ENCODE measurements at regions of chr3 and their contacts with region 1.

Region 1: DNA sequence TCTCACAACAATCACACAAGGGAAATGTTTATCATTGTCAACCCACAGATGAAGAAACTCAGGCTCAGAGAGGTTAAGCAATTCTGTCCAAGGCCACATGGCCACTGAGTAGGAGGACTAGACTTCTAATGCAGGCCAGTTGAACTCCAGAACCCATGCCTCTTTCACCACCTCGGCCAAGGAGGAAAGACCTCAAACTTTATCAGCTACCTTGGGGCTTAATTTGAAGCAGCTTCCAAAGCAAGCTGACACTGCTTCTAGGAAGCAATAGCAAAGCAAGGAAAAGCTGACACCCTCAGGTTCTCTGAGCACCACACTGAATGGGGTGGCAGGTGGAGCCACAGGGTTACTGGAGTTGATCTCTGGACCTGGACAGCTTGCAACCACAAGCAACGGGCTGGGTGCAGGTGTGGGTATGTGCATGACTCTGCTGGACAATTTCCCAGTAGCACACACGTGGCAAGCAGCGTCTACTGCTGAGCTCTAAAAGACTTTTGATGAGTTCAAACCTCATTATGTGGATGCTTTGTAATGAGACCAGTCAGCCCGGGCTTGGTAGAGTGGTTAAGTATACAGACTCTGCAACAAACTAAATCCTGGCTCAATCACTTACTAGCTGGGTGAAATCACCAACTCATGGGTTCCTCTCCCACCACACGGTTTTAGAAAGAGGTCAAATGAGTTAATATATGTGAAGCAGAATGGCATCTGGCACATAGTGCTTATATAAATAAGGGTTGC is 23.1 kb downstream of the CCNL1 start:
- DNase-seq: peak; percentile 35 to 46
- H3K4me3 ChIP-seq: no peak overlapping the region; the same call in 1 of the 2 replicates
- H3K27ac ChIP-seq: no peak overlapping the region
- H3K4me1 ChIP-seq: peaks cover 25% of the 10 kb centered on the region
- H3K27me3 ChIP-seq: no peaks in the 10 kb centered on the region
- CTCF ChIP-seq: no peak

Region 2: GRCh38 chr3:155753036-155753639 is 1383.7 kb before region 1 on chr3:
- CTCF ChIA-PET with region 1: no interaction called
- POLR2A ChIA-PET with region 1: no interaction called
- intact Hi-C with region 1: loop called (anchors 2 kb)
- DNase-seq: no peak
- H3K4me3 ChIP-seq: no peak overlapping the region
- H3K27ac ChIP-seq: no peak overlapping the region
- H3K4me1 ChIP-seq: peaks cover 14% of the 10 kb centered on the region
- H3K27me3 ChIP-seq: no peaks in the 10 kb centered on the region
- CTCF ChIP-seq: peak; percentile 76

Region 3: GRCh38 chr3:156017352-156018030 is 1119.3 kb before region 1 on chr3:
- CTCF ChIA-PET with region 1: no interaction called
- POLR2A ChIA-PET with region 1: no interaction called
- intact Hi-C with region 1: loop called (anchors 5 kb)
- DNase-seq: no peak
- H3K4me3 ChIP-seq: no peak overlapping the region
- H3K27ac ChIP-seq: no peak overlapping the region
- H3K4me1 ChIP-seq: no peaks in the 10 kb centered on the region
- H3K27me3 ChIP-seq: no peaks in the 10 kb centered on the region
- CTCF ChIP-seq: no peak

Region 4: DNA sequence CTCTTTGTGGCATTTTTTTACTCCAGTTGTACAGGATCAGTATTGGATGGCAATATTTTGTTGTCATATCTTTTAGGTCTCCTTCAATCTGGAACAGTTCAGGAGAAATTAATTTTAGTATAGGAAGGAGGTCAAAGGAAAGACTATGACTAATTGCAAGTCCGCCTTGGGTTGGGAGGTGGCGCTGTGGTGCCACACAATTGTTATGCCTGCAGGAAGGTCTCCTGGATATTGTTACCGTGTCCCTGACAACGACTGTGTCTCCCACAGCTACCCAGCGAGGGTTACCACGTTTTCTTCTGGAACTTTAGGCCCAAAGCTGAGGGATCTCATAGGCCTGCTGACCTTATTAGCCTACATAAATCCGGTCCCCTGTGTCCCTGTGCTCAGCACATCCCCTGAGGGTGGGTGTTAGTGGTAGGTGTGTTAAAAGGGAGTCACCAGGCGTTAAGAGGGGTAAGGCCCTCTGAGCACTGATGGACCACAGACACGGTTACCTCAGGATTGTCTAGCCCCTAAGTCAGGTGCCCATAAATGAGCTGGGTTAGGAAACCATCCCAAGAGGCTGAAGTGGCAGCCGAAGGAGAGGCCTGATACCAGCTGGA is 984.9 kb before region 1 on chr3:
- CTCF ChIA-PET with region 1: interaction called, 6 read pairs
- POLR2A ChIA-PET with region 1: no interaction called
- intact Hi-C with region 1: loop called (anchors 1 kb)
- DNase-seq: peak; percentile 49 to 62
- H3K4me3 ChIP-seq: no peak overlapping the region
- H3K27ac ChIP-seq: no peak overlapping the region
- H3K4me1 ChIP-seq: no peaks in the 10 kb centered on the region
- H3K27me3 ChIP-seq: no peaks in the 10 kb centered on the region
- CTCF ChIP-seq: peak; percentile 92

Region 5: GRCh38 chr3:157447026-157447694 is 310.3 kb after region 1 on chr3:
- CTCF ChIA-PET with region 1: no interaction called
- POLR2A ChIA-PET with region 1: interaction called, 17 read pairs
- intact Hi-C with region 1: no loop called
- DNase-seq: no peak
- H3K4me3 ChIP-seq: no peak overlapping the region
- H3K27ac ChIP-seq: no peak overlapping the region
- H3K4me1 ChIP-seq: peaks cover 18% of the 10 kb centered on the region
- H3K27me3 ChIP-seq: no peaks in the 10 kb centered on the region
- CTCF ChIP-seq: peak; percentile 70